ENCODE measurements at regions of chr14 and their contacts with region 1.

Region 1: DNA sequence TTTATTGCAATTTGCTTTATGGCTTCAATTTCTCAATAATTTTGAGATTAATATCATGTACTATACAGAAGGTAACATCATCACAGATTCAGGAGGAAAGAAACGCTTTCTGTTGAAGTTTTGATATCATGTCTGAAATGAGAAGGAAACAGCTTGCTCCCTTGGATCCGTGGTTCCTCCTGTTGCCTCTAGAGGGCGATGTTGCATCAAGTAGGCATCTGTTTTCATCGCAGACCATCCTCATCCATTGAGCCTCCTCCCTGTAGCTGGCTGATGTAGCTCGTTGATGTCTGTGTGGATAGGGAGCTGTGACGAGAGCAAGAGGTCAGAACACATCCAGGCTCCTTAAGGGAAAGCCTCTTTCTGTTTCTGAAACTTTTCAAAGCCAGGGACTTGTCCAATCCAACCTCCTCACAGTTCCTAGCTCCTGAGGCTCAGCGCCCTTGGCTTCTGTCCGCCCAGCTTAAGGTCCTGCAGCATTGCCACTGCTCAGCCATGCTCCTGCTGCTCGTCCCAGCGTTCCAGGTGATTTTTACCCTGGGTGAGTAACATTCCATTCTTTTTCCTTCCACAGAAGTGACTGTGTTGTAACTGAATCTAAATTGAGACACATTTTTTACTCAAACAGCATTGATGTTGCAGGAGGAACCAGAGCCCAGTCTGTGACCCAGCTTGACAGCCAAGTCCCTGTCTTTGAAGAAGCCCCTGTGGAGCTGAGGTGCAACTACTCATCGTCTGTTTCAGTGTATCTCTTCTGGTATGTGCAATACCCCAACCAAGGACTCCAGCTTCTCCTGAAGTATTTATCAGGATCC is 304.8 kb upstream of the OR4E1 start:
- DNase-seq: peak; percentile 91
- H3K4me3 Mint-ChIP-seq: peak overlapping the region; percentile 78
- H3K27ac Mint-ChIP-seq: peak overlapping the region; percentile 65
- H3K4me1 Mint-ChIP-seq: peaks cover 13% of the 10 kb centered on the region
- H3K27me3 Mint-ChIP-seq: peaks cover 21% of the 10 kb centered on the region

Region 2: GRCh38 chr14:21940887-21941856 is 37.2 kb before region 1 on chr14:
- intact Hi-C with region 1: loop called (anchors 5 kb)
- DNase-seq: peak; percentile 76
- H3K4me3 Mint-ChIP-seq: peak overlapping the region; percentile 83
- H3K27ac Mint-ChIP-seq: peak overlapping the region; percentile 83
- H3K4me1 Mint-ChIP-seq: peaks cover 19% of the 10 kb centered on the region
- H3K27me3 Mint-ChIP-seq: peaks cover 34% of the 10 kb centered on the region

Region 3: GRCh38 chr14:22010545-22011252 is 32.3 kb after region 1 on chr14:
- intact Hi-C with region 1: no loop called
- DNase-seq: no peak
- H3K4me3 Mint-ChIP-seq: no peak overlapping the region
- H3K27ac Mint-ChIP-seq: no peak overlapping the region
- H3K4me1 Mint-ChIP-seq: peaks cover 14% of the 10 kb centered on the region
- H3K27me3 Mint-ChIP-seq: no peaks in the 10 kb centered on the region